Caco-2 (cell line): ENCODE measurements at regions of chr5 and their contacts with region 1.

Region 1: DNA sequence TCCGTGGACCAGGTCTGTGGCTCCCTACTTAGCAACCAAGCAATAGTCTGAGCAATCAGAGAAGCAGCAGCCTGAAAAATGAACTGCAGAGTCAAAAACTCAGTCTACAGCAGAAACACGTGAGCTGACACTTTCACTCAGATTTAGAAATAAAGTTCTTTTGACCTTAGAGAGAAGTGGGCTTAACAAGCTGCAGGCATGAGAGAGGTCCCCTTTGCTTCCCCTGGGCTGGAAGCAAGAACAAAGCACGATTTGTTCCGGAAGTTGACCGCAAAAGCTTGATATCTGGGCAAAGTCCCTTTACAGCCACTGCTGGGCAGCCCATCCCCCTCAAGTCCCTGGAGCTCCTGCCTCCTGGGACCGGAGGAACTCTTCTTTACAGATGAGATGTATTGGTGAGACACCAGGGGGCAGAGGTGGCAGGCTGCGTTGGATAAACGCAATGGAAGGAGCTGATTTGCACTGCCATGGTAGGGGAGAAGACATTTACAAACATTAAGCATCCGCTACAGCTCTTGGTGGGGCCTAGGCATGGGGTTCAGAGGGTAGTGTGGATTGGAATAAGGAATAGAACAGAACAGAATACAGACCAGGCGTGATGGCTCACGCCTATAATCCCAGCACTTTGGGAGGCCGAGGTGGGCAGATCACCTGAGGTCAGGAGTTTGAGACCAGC is 5.8 kb upstream of the SOWAHA start:
- DNase-seq: peak; percentile 87 to 94
- H3K4me3 ChIP-seq: peak overlapping the region; percentile 8
- H3K4me3 Mint-ChIP-seq: peak overlapping the region; percentile 45
- H3K27ac Mint-ChIP-seq: peak overlapping the region; percentile 20
- H3K4me1 ChIP-seq: peaks cover 13% of the 10 kb centered on the region
- H3K4me1 Mint-ChIP-seq: peaks cover 16% of the 10 kb centered on the region
- H3K27me3 ChIP-seq: no peaks in the 10 kb centered on the region
- H3K27me3 Mint-ChIP-seq: no peaks in the 10 kb centered on the region
- CTCF ChIP-seq: peak; percentile 44 to 75

Region 2: DNA sequence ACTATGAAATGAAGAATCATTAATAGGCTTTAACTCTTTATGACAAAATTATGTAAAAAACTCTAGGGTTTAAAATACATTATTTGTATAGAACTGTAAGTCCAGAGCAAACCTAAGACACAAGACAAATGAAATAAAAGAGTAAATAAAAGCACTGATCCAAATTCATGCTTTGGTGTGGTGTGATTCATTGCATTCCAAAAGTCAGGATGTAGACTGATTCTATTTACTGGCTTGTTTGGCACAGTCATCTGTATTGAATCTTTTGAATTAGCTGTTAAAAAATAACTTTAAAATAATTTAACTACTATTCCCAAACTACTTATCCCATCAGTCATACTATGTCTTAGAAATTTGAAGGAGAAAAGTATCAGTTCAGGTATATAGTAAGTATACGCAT is 102.4 kb before region 1 on chr5:
- CTCF ChIA-PET with region 1: no interaction called
- POLR2A ChIA-PET with region 1: no interaction called
- intact Hi-C with region 1: no loop called
- DNase-seq: no peak
- H3K4me3 ChIP-seq: no peak overlapping the region
- H3K4me3 Mint-ChIP-seq: no peak overlapping the region
- H3K27ac Mint-ChIP-seq: no peak overlapping the region
- H3K4me1 ChIP-seq: no peaks in the 10 kb centered on the region
- H3K4me1 Mint-ChIP-seq: no peaks in the 10 kb centered on the region
- H3K27me3 ChIP-seq: no peaks in the 10 kb centered on the region
- H3K27me3 Mint-ChIP-seq: no peaks in the 10 kb centered on the region
- CTCF ChIP-seq: no peak

Region 3: DNA sequence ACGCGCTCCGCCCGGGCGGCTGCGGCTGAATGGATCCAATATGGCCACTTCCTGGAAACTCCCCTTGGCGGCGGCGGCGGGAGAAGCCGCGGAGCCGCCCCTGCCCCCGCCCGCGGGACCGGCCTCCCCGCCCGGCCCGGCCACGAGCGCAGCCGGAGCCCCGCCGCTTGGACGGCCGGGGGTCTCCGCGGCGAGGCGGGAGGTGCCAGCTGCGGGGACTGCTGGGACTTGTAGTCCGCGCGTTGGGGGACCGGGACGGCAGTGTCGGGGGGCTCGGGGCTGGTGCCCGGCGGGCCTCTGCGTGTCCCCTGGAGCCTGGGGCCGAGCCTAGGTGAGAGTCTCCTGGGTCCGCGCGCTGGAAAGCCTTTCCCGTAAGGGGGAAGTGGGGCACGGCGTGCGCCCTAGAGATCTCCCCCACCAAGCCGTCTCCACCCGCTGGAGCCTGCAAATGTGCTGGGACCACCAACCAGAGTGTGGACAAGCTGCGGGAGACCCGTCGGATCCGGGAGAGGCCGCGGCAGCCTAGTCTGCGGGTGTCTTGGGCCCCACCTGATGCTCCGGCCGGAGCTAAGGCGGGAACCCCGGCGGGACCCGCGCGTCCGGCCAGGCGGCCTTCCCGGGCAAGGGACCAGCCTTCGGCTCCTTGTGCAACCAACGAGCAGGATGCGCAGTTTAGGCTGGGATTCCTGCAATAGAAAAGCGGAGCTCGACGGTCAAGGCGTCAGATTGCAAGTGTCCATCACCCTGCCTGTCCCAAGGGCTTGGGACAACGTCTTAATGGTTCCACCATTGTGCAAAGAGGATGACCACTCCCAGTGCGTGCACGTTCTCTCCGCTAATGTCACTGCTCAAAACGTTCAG is 29.9 kb before region 1 on chr5 and contains the start of gene SEPTIN8:
- CTCF ChIA-PET with region 1: interaction called, 3 read pairs
- POLR2A ChIA-PET with region 1: no interaction called
- intact Hi-C with region 1: loop called (anchors 2 kb)
- DNase-seq: peak in 1 of 2 experiments; percentile 69
- H3K4me3 ChIP-seq: peak within 1 kb of the TSS; percentile 87
- H3K4me3 Mint-ChIP-seq: peak within 1 kb of the TSS; percentile 73
- H3K27ac Mint-ChIP-seq: peak within 1 kb of the TSS; percentile 46
- H3K4me1 ChIP-seq: peaks cover 25% of the 10 kb centered on the region
- H3K4me1 Mint-ChIP-seq: peaks cover 26% of the 10 kb centered on the region
- H3K27me3 ChIP-seq: no peaks in the 10 kb centered on the region
- H3K27me3 Mint-ChIP-seq: peaks cover 5% of the 10 kb centered on the region
- CTCF ChIP-seq: no peak
- total RNA-seq, gene SEPTIN8: 54.0 and 60.7 TPM in 2 replicates

Region 4: GRCh38 chr5:132859889-132860437 is 52.7 kb after region 1 on chr5:
- CTCF ChIA-PET with region 1: no interaction called
- POLR2A ChIA-PET with region 1: no interaction called
- intact Hi-C with region 1: no loop called
- DNase-seq: no peak
- H3K4me3 ChIP-seq: no peak overlapping the region
- H3K4me3 Mint-ChIP-seq: no peak overlapping the region
- H3K27ac Mint-ChIP-seq: no peak overlapping the region
- H3K4me1 ChIP-seq: no peaks in the 10 kb centered on the region
- H3K4me1 Mint-ChIP-seq: no peaks in the 10 kb centered on the region
- H3K27me3 ChIP-seq: no peaks in the 10 kb centered on the region
- H3K27me3 Mint-ChIP-seq: peaks cover 2% of the 10 kb centered on the region
- CTCF ChIP-seq: no peak

Region 5: DNA sequence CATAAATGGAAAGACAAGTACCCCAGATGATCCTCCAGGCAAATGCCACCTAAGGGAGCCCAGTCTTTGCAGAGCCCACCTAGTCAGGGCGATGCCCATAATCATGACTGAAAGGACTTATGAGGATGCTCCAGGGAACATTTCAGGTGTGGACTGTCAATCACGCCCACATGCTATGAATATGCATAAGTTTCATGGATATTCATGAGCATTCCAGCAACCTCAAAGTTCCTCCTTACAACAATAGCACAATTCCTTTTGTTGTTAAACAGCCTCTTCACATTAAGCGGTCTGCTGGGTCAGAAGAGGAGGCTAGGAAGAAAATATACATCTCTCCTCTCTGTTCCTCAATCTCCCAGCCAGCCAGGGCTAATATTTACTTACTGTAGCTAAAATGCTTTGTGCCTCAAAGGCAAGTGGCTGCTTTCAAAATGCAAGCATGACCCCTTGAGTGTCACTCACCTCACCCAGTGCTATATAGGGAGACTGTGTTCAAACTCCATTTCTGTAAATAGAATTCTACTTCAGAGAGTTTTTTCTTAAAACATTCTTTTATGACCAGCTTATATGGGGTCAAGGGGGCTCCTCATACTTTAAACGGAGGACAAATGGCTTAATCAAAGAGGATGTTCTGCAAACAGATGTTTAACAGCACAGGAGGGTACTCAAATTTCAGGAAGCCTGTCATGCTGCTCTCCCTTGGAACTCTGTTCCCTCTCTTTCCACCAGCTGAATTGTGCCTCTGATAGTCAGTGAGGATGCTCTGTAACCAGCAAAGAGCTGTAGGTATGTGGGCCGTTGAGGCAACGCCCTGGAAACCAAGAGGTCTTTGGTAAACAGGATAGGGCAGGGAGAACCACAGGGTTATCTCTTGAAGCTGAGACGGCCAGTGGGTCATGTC is 999.8 kb after region 1 on chr5:
- CTCF ChIA-PET with region 1: no interaction called
- POLR2A ChIA-PET with region 1: no interaction called
- intact Hi-C with region 1: no loop called
- DNase-seq: peak in 1 of 2 experiments; percentile 36
- H3K4me3 ChIP-seq: no peak overlapping the region
- H3K4me3 Mint-ChIP-seq: no peak overlapping the region
- H3K27ac Mint-ChIP-seq: no peak overlapping the region
- H3K4me1 ChIP-seq: no peaks in the 10 kb centered on the region
- H3K4me1 Mint-ChIP-seq: no peaks in the 10 kb centered on the region
- H3K27me3 ChIP-seq: no peaks in the 10 kb centered on the region
- H3K27me3 Mint-ChIP-seq: peaks cover 11% of the 10 kb centered on the region
- CTCF ChIP-seq: no peak